Right ventricle myocardium inferior (tissue), 1 donor: ENCODE measurements at regions of chr15 and their contacts with region 1.

Region 1: GRCh38 chr15:89874926-89875564 is 18.7 kb downstream of the AP3S2 start:
- DNase-seq: peak; percentile 90
- ATAC-seq: peak; percentile 90

Region 2: GRCh38 chr15:89611317-89611716 is 263.7 kb before region 1 on chr15:
- intact Hi-C with region 1: no loop called
- DNase-seq: no peak
- ATAC-seq: no peak

Region 3: GRCh38 chr15:89740137-89740536 is 134.9 kb before region 1 on chr15:
- intact Hi-C with region 1: loop called (anchors 2 kb)
- DNase-seq: no peak
- ATAC-seq: peak; percentile 84

Region 4: DNA sequence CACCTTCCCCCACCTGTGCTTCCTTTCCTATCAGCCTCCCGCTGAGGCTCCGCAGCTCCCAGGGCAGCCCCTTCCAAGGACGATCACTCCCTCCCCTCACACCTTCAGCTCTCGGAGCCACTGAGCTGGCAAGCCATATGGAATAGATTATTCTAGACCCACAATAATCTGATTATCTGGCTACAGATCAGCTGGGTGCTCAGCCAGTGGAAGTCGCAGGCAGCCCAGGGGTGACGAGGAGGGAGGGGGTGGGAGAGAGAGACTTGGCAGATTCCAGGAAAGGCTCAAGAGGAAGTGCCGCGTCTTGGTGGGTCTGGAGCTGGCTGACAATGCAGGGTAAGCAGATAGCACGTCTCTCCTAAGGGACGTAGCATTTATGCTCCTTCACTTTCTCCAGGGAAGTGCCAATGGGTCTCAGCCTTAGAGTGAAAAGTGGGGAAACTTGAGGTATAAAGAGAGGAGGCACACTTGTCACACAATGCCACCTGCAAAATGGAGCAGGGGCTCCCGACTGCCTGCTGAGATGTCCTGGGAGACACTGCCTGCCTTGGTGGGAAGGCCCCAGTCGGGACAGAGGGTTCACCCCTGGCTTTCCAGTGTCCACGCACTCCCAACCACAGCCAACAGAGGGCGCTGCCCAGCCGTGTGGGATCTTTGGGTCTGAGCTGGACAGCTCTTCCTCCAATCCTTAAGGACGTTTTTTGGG is 114.6 kb before region 1 on chr15:
- intact Hi-C with region 1: loop called (anchors 1 kb)
- DNase-seq: peak; percentile 91
- ATAC-seq: peak; percentile 90

Region 5: DNA sequence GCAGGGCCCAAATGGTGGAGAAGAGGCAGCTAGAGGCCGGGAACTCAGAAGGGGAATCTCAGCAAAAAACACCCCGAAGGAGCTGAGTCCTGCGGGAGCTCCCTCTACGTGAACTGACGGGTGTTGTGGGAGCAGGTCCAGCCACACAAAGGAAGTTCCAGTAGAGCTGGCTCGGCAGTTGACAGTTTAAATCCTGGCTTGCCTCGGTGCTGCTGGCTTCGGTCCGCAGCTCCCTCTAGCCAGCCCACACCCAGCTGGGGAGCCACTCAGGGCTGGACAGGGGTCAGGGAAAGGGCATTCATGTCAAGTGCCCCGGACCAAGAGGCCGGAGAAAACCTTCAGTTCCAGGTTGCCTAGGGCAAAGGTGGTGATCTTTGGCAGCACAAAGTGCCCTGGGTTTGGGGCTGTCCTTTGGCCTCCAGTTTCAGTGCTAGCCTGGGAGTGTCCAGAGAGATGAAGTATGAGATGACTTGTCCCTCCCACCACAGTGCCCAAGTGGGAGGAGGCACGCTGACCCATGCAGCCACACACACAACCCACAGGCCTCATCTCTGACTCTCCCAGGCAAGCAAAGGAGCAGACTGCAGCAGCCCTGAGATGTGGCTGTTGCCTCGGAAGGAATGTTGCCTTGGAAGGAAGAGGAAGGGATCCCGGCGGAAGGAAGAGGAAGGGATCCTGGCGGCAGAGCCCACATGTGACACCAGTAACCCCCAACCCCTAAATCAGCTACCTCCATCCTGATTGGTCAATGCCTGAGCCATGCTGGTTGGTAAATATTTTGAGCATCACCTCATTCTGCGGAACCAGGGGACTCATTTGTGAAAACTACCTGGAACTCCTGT is 46.6 kb before region 1 on chr15:
- intact Hi-C with region 1: loop called (anchors 5 kb)
- DNase-seq: peak; percentile 80
- ATAC-seq: peak; percentile 91